ENCODE measurements at regions of chr2 and their contacts with region 1.

Region 1: GRCh38 chr2:39227628-39228412 is 15.9 kb downstream of the CDKL4 start:
- DNase-seq: peak; percentile 66 to 84 (median 70)
- H3K4me3 ChIP-seq: no peak overlapping the region
- H3K4me3 Mint-ChIP-seq: peak overlapping the region; percentile 9 to 84 (median 72)
- H3K27ac ChIP-seq: no peak overlapping the region
- H3K27ac Mint-ChIP-seq: peak overlapping the region in 4 of 8 donors; percentile 60 to 88 (median 72)
- H3K4me1 ChIP-seq: peaks cover 13% of the 10 kb centered on the region
- H3K4me1 Mint-ChIP-seq: peaks cover 18 to 28% (median 26%) of the 10 kb centered on the region in 3 donors
- H3K27me3 ChIP-seq: no peaks in the 10 kb centered on the region
- H3K27me3 Mint-ChIP-seq: no peaks in the 10 kb centered on the region

Region 2: GRCh38 chr2:38947240-38948239 is 280.3 kb before region 1 on chr2:
- CTCF ChIA-PET with region 1: interaction called, 86 read pairs
- POLR2A ChIA-PET with region 1: interaction called, 5 read pairs
- DNase-seq: peak; percentile 23 to 70 (median 31)
- H3K4me3 ChIP-seq: no peak overlapping the region
- H3K4me3 Mint-ChIP-seq: no peak overlapping the region
- H3K27ac ChIP-seq: no peak overlapping the region
- H3K27ac Mint-ChIP-seq: no peak overlapping the region
- H3K4me1 ChIP-seq: no peaks in the 10 kb centered on the region
- H3K4me1 Mint-ChIP-seq: no peaks in the 10 kb centered on the region
- H3K27me3 ChIP-seq: no peaks in the 10 kb centered on the region
- H3K27me3 Mint-ChIP-seq: peaks cover 0 to 2% of the 10 kb centered on the region in 2 donors

Region 3: GRCh38 chr2:39109537-39109936 is 118.3 kb before region 1 on chr2:
- CTCF ChIA-PET with region 1: interaction called, 19 read pairs
- POLR2A ChIA-PET with region 1: interaction called, 4 read pairs
- DNase-seq: no peak
- H3K4me3 ChIP-seq: no peak overlapping the region
- H3K4me3 Mint-ChIP-seq: no peak overlapping the region
- H3K27ac ChIP-seq: no peak overlapping the region
- H3K27ac Mint-ChIP-seq: peak overlapping the region in 7 of 8 donors; percentile 1 to 73 (median 24)
- H3K4me1 ChIP-seq: peaks cover 29% of the 10 kb centered on the region
- H3K4me1 Mint-ChIP-seq: peaks cover 56 to 90% (median 80%) of the 10 kb centered on the region in 3 donors
- H3K27me3 ChIP-seq: no peaks in the 10 kb centered on the region
- H3K27me3 Mint-ChIP-seq: no peaks in the 10 kb centered on the region

Region 4: DNA sequence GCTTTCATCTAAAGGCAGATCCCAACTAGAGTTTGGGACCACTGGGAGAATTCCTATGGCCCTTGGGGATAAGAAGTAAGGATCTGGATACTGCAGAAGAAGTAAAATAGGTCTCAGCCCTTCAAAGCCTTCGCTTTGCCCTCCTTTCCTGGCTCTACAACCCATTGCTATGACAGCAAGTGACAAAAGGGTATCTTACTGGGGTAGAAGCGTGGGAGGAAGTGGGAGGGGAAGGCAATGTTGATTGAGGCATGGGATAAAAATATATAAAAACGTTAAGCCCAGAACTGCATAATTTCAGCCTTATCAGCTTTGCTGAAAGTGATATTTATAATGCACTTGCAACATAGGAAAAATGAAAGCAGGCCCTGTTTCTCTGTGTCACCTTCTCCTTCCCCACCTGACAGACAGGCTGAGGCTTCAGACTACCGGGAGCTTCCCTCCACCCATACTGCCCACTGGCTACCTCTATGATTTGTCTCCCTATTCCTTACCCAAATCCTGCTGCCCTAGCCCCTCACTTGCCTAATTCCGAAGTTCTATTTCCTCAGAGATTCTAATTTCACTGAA is 92.0 kb before region 1 on chr2:
- CTCF ChIA-PET with region 1: interaction called, 12 read pairs
- POLR2A ChIA-PET with region 1: no interaction called
- DNase-seq: peak in 1 of 5 donors; percentile 26
- H3K4me3 ChIP-seq: peak overlapping the region; percentile 27
- H3K4me3 Mint-ChIP-seq: peak overlapping the region in 6 of 7 donors; percentile 58 to 73 (median 66)
- H3K27ac ChIP-seq: no peak overlapping the region
- H3K27ac Mint-ChIP-seq: peak overlapping the region in 7 of 8 donors; percentile 35 to 92 (median 79)
- H3K4me1 ChIP-seq: peaks cover 25% of the 10 kb centered on the region
- H3K4me1 Mint-ChIP-seq: peaks cover 22 to 54% (median 48%) of the 10 kb centered on the region in 3 donors
- H3K27me3 ChIP-seq: no peaks in the 10 kb centered on the region
- H3K27me3 Mint-ChIP-seq: peaks cover 0 to 2% of the 10 kb centered on the region in 2 donors

Region 5: GRCh38 chr2:39216346-39217191 is 11.3 kb before region 1 on chr2:
- CTCF ChIA-PET with region 1: interaction called, 20 read pairs
- POLR2A ChIA-PET with region 1: interaction called, 3 read pairs
- DNase-seq: peak; percentile 45 to 90 (median 85)
- H3K4me3 ChIP-seq: peak overlapping the region; percentile 42
- H3K4me3 Mint-ChIP-seq: peak overlapping the region; percentile 0 to 66 (median 33)
- H3K27ac ChIP-seq: no peak overlapping the region
- H3K27ac Mint-ChIP-seq: peak overlapping the region; percentile 8 to 85 (median 60)
- H3K4me1 ChIP-seq: peaks cover 35% of the 10 kb centered on the region
- H3K4me1 Mint-ChIP-seq: peaks cover 32 to 68% (median 58%) of the 10 kb centered on the region in 3 donors
- H3K27me3 ChIP-seq: no peaks in the 10 kb centered on the region
- H3K27me3 Mint-ChIP-seq: no peaks in the 10 kb centered on the region

Region 6: DNA sequence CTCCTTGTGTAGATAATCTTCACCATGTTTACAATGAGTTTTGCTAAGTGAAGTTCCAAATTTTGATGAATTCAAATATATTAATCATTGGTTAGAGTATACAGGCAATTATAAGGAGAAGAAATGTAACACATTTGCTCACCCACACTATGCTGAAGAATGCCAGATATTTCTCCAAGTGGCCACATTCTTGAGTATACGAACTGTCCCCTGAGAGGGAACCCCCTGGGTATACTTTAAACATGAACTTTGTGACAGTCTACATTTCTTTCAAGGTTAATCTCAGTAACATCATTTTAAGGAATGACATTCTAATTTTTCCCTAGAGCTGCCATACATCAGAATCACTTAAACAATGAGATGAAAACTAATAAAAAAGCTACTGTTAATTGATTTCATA is 55.7 kb after region 1 on chr2:
- CTCF ChIA-PET with region 1: no interaction called
- POLR2A ChIA-PET with region 1: no interaction called
- DNase-seq: no peak
- H3K4me3 ChIP-seq: no peak overlapping the region
- H3K4me3 Mint-ChIP-seq: no peak overlapping the region
- H3K27ac ChIP-seq: no peak overlapping the region
- H3K27ac Mint-ChIP-seq: no peak overlapping the region
- H3K4me1 ChIP-seq: no peaks in the 10 kb centered on the region
- H3K4me1 Mint-ChIP-seq: no peaks in the 10 kb centered on the region
- H3K27me3 ChIP-seq: no peaks in the 10 kb centered on the region
- H3K27me3 Mint-ChIP-seq: no peaks in the 10 kb centered on the region